KBM-7 (cell line): ENCODE measurements at regions of chr7 and their contacts with region 1.

Region 1: GRCh38 chr7:74379938-74380337 is 73.8 kb upstream of the GTF2IRD1 start:
- DNase-seq: no peak

Region 2: DNA sequence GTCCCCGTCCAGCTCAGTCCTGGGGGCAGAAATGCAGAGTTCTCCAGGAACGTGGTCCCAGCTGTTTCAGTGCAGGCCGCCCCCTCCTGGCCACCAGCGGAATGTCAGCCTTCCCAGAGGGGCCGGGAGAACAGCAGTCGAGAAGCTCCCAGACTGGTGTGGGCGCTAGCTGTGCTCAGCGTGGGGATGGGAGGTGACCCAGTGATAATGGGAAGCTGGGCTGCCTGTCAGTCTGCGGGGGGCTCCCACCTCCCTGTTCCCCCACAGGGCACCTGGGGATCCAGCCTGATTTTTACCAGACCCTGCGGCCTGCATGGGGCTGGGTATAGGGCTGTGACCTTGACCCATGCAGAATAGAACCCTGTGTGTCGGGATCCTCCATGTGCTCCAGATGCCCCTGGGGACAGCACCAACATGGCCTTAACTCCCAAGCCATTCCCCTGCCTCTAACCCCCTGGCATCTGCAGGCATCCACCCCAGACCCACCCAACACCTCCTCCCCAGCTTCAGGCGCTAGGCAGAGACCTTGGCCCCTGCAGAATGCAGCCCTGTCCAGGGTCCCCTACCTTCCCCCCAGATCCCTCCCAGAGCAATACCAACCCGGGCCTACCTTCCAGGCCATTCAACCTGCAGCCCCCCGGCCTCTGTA is 352.9 kb before region 1 on chr7:
- in situ Hi-C with region 1: loop called (anchors 25 kb)
- DNase-seq: peak; percentile 76

Region 3: GRCh38 chr7:74525880-74526279 is 145.9 kb after region 1 on chr7:
- in situ Hi-C with region 1: no loop called
- DNase-seq: no peak

Region 4: GRCh38 chr7:74575138-74575727 is 195.3 kb after region 1 on chr7:
- in situ Hi-C with region 1: no loop called
- DNase-seq: no peak